Dorsolateral prefrontal cortex (tissue), 120 donors: ENCODE measurements at regions of chr11 and their contacts with region 1.

Region 1: GRCh38 chr11:119673759-119674336 is 55.2 kb downstream of the NECTIN1 start:
- DNase-seq: no peak
- H3K4me3 ChIP-seq: no peak overlapping the region
- H3K27ac ChIP-seq: peak overlapping the region in 46 of 59 donors; percentile 22 to 96 (median 89)
- H3K27me3 ChIP-seq: no peaks in the 10 kb centered on the region
- CTCF ChIP-seq: peak in 3 of 56 donors; percentile 16 to 21 (median 16)

Region 2: DNA sequence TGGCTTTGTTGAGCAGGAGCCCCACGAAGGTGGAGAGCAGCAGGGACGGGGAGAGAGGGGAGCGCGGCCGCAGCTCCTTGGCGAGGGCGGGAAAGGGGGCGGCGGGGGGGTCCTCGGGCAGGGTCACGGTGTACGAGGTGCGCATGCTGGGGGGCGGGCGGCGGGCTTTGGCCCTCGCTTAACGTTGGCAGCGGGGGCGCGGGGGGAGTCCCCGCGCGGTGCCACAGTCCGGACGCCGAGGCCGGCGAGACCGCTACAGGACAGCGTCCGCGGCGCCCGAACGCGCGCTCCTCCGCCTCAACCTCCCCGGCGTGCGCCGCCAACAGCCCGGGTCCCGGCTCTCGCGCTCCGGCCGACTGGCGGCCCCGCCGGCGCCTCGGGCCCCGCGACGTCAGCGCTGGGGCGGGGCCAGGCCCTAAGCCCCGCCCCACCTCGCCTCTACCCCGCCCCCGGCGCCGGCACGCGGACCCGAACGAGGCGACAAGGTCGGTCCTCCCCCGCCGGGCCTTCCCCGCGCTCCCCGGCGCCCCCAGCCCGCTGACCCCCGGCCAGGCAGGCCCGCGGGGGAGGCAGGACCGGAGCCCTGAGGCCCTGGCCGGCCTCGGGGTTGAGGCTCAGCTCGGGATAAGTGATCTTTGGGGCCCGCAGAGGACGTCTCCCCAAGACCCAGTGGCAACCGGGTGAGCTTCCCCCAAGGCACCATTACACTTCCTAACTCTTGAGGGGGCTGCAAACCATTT is 309.8 kb before region 1 on chr11:
- intact Hi-C with region 1: no loop called
- DNase-seq: peak in 9 of 10 donors; percentile 63 to 88 (median 76)
- H3K4me3 ChIP-seq: peak overlapping the region; percentile 38 to 77 (median 64)
- H3K27ac ChIP-seq: peak overlapping the region; percentile 44 to 99 (median 92)
- H3K27me3 ChIP-seq: no peaks in the 10 kb centered on the region
- CTCF ChIP-seq: peak in 8 of 56 donors; percentile 4 to 21 (median 14)

Region 3: GRCh38 chr11:119709638-119710346 is 35.9 kb after region 1 on chr11:
- intact Hi-C with region 1: loop called in 1 of 2 experiments (anchors 5 kb)
- DNase-seq: peak in 8 of 10 donors; percentile 66 to 87 (median 79)
- H3K4me3 ChIP-seq: peak overlapping the region in 27 of 59 donors; percentile 0 to 44 (median 22)
- H3K27ac ChIP-seq: peak overlapping the region in 56 of 59 donors; percentile 27 to 84 (median 70)
- H3K27me3 ChIP-seq: no peaks in the 10 kb centered on the region
- CTCF ChIP-seq: no peak

Region 4: GRCh38 chr11:119891055-119891768 is 217.4 kb after region 1 on chr11:
- intact Hi-C with region 1: loop called (anchors 5 to 10 kb)
- DNase-seq: peak in 9 of 10 donors; percentile 67 to 94 (median 87)
- H3K4me3 ChIP-seq: peak overlapping the region in 5 of 59 donors; percentile 18 to 36 (median 22)
- H3K27ac ChIP-seq: peak overlapping the region in 58 of 59 donors; percentile 51 to 99 (median 94)
- H3K27me3 ChIP-seq: peaks cover 0 to 7% (median 0%) of the 10 kb centered on the region in 45 donors
- CTCF ChIP-seq: peak in 15 of 56 donors; percentile 8 to 41 (median 23)